ENCODE measurements at regions of chr10 and their contacts with region 1.

Region 1: DNA sequence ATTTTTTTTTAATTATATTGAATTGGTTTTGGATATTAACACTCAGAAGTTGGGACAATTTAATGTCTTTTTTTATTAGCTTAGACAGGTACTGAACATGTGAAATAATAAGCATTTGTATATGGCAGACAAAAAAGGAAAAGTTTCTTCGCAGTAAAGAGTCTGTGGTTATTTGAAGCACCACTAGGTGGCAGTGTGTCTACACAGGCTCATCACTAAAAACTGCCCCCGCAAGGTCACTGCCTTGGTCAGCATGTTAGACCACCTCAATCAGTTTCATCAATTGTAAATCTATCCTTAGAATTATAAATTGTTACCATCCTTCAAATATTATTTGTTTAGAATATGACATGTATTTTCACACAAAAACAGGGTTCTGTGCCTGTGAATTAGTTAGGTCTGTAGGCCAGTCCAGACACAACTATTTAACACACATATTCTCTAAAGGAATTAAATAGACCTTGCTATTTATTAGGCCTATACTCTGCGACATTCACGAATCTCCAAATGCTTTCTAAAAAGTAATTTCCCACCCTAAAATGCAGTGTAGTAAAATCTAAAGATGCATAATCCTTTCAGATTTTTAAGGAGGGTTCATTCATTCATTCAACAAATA is 17.0 kb downstream of the PNLIPRP3 start:
- H3K4me3 Mint-ChIP-seq: no peak overlapping the region
- H3K27ac Mint-ChIP-seq: no peak overlapping the region
- H3K4me1 Mint-ChIP-seq: peaks cover 5% of the 10 kb centered on the region
- H3K27me3 Mint-ChIP-seq: peaks cover 6% of the 10 kb centered on the region

Region 2: DNA sequence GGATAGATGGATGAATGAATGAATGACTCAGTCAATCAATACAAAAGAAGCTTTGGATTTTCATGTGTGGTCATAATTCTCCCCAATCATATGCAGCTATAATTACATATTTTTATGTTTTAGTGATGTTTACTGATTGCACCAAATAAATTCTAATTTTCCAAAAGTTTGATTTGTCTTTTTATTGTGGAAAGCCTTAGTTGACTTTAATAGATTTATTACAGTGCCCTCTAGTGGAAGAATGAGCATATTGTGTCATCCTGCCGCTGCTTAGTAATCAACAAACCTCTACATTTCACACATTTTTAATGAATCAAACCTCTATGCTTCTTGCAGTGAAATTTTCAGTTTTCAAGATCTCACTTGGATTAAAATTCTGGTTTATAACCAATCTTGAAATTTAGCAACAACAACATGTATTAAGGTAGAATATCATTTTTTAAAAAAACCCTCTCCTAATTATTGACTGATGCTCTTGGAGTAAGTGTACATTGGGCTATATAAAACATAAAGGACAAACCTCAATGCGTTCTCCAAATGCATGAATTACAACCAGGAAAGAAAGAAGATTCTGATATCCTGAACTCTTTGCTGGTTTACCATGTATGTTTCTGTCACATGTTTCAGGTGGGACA is 45.5 kb after region 1 on chr10:
- intact Hi-C with region 1: loop called (anchors 1 kb)
- H3K4me3 Mint-ChIP-seq: no peak overlapping the region
- H3K27ac Mint-ChIP-seq: no peak overlapping the region
- H3K4me1 Mint-ChIP-seq: no peaks in the 10 kb centered on the region
- H3K27me3 Mint-ChIP-seq: peaks cover 2% of the 10 kb centered on the region

Region 3: DNA sequence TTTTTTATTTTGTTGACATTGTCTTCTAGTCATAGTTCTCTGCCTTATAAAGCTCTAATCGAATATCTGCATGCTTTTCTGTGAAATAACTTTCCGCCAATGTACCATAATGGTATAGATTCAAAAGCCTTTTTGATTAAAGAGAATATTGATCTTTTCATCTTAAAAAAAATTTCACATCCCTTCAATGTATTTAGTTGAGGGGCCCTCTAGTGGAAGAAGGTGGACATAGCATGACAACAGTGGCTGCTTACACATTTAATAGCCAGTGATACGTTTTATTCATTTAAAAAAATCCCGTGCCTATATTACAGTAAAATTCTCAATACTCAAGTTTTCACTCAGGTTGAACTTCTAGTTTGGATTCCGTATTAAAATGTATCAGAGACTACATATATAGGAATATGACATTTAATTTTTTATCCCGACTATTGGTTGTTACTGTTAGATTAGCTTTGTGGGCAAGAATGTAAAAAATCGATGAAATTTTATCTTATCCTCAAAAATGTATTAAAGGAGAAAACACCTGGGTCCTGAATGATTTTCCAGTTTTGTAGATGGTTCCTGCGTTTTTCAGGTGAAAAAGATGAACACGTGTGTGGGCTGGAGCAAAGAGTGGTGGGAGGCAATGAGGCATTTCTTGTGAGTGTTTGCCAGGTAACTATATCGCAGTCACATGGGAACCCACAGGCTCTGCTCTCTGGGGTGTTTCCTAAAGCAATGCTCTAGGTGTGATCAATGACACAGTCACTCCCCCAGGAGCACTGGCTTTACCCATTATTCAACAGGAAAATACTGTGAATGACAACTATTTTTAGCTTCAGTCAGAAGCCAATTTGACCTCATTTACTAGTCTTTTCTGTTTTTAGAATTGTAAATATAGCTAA is 77.0 kb after region 1 on chr10:
- intact Hi-C with region 1: loop called (anchors 2 kb)
- H3K4me3 Mint-ChIP-seq: no peak overlapping the region
- H3K27ac Mint-ChIP-seq: no peak overlapping the region
- H3K4me1 Mint-ChIP-seq: no peaks in the 10 kb centered on the region
- H3K27me3 Mint-ChIP-seq: peaks cover 6% of the 10 kb centered on the region

Measured in dendritic cell treated with granulocyte-macrophage colony-stimulating factor and Interleukin-4, amounts not matched to agents 40 ng/mL and 50 ng/mL, for 4 days (primary cell).